PC-9 (cell line): ENCODE measurements at regions of chr1 and their contacts with region 1.

Region 1: DNA sequence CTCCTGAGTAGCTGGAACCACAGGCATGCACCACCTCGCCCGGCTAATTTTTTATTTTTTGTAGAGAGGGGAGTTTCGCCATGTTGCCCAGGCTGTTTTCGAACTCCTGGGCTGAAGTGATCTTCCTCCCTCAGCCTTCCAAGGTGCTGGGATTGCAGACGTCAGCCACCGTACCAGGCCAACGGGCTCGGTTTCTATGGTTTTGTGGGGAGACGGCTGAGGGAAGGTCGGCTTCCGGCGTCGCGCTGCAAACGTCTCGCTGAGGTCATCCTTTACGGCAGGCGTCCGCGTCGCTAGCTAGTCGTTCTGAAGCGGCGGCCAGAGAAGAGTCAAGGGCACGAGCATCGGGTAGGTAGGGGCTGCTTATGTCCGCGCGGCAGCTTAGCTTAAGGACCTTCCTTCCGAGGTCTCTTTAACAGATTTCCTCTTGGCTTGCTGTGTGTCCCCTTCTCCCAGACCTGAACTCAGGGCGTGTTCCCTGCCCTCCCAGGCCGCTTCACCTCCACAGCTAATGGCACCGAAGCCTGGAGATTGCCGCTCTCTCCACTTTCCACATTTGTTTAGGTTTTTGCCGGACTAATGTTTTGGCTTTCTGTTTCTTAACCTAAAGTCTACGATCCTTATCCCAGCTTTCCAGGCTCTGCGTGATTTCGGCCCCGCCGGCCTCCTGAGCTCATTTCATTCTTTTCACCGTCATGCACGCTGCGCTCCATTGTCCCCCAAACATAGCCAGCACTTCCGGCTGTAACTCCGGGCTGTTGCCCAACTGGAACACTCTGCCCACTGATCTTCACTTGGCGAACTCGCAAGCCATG is at the start of gene NDUFS5:
- DNase-seq: peak; percentile 83 to 89
- H3K4me3 ChIP-seq: peak within 1 kb of the TSS; percentile 86
- H3K27ac ChIP-seq: peak within 1 kb of the TSS; percentile 81
- H3K4me1 ChIP-seq: peaks cover 6% of the 10 kb centered on the region
- H3K27me3 ChIP-seq: no peaks in the 10 kb centered on the region
- CTCF ChIP-seq: no peak
- total RNA-seq, gene NDUFS5: 498 and 524 TPM in 2 replicates

Region 2: DNA sequence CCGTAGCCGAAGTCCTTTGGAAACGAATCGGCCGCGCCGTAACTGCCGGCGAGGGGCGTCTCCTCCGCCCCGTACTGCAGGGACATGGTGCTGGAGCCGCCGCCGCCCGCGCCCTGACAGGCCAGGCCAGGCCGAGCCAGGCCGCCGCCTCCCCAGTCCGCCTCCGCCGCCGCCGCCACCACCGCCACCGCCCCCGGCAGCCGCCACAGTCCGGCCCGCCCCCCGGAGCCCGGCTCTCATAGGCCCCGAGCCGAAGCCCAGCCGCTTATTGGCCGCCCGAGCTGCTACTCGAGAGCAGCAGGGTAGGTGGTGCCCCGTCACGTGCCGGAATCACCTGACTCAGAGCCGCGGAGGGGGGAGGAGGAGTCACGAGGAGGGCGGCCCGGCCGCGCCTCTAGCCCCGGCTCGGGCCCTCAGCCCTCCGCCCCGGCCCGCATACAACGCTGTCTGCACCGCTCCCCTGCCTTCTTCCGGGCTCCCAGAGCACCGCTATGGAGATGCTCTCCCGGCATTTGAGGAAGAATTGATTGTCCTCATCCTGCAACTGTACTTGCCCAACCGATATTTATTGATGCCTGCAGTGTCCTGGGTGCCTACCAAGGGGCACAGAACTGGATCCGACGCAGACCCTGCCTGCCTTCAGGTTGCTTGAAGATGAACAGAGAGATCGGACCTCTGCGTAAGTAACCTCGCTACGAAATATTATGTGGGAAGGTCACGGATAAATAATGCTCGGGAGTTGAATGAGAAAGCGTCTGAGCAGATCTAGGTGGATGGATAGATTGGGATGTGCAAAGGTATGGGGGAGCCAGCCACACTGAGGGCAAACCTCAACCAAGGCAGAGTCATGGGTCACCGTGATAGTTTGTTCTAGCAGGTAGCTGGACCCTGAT is 166.5 kb before region 1 on chr1 and contains the start of gene RRAGC:
- CTCF ChIA-PET with region 1: no interaction called
- POLR2A ChIA-PET with region 1: interaction called, 3 read pairs
- intact Hi-C with region 1: loop called (anchors 1 kb)
- DNase-seq: peak; percentile 92 to 100
- H3K4me3 ChIP-seq: peak within 1 kb of the TSS; percentile 72
- H3K27ac ChIP-seq: peak within 1 kb of the TSS; percentile 59
- H3K4me1 ChIP-seq: peaks cover 23% of the 10 kb centered on the region
- H3K27me3 ChIP-seq: no peaks in the 10 kb centered on the region
- CTCF ChIP-seq: no peak
- total RNA-seq, gene RRAGC: 22.1 and 33.0 TPM in 2 replicates

Region 3: GRCh38 chr1:38873027-38873969 is 153.0 kb before region 1 on chr1 and contains the start of gene MYCBP:
- CTCF ChIA-PET with region 1: no interaction called
- POLR2A ChIA-PET with region 1: interaction called, 3 read pairs
- intact Hi-C with region 1: loop called (anchors 1 kb)
- DNase-seq: peak; percentile 89 to 99
- H3K4me3 ChIP-seq: peak within 1 kb of the TSS; percentile 88
- H3K27ac ChIP-seq: no peak within 1 kb of the TSS
- H3K4me1 ChIP-seq: peaks cover 15% of the 10 kb centered on the region
- H3K27me3 ChIP-seq: no peaks in the 10 kb centered on the region
- CTCF ChIP-seq: peak; percentile 37; the same call in 1 of the 2 replicates
- total RNA-seq, gene MYCBP: 51.9 TPM in 2 replicates

Region 4: GRCh38 chr1:39043513-39043912 is 17.3 kb after region 1 on chr1:
- CTCF ChIA-PET with region 1: no interaction called
- POLR2A ChIA-PET with region 1: no interaction called
- intact Hi-C with region 1: no loop called
- DNase-seq: no peak
- H3K4me3 ChIP-seq: no peak overlapping the region
- H3K27ac ChIP-seq: no peak overlapping the region
- H3K4me1 ChIP-seq: no peaks in the 10 kb centered on the region
- H3K27me3 ChIP-seq: no peaks in the 10 kb centered on the region
- CTCF ChIP-seq: no peak

Region 5: DNA sequence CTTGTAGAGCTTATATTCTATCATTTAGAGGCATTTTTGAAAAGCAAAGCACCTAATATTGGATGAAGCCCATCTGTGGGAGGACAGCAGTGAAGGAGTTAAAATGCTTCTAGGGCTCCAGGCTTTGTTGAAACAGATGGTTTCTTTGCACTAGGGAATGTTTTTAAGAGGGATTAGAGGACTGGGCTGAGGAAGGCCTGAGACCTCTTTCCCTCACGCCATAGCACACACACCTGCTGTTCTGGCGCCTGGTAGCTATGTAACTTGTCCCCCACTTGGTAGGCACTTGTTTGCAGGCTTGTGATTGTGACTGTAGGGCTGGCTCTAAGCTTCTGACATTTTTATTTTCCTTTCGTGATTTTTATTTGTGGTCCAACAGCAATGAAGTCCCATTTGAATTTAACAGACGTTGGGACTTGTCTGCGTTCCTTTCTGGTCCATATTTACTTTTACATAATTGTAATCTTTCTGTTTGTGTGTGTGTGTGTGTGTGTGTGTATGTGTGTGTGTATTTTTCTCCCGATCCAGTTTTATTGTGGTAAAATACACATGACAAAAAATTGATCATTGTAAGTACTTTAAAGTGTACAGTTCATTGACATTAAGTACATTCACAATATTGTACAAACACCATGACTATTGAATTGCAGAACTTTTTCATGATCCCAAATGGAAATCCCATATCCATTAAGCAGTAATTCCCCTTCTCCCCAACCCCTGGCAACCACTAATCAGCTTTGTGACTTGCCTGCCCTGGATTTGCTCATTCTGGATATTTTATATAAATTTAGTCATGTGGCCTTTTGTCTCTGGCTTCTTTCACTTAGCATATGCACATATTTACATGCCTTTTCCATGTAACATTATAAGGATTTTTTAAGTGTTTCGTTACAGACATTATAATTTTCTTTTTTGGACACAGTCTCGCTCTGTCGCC is 144.7 kb after region 1 on chr1:
- CTCF ChIA-PET with region 1: no interaction called
- POLR2A ChIA-PET with region 1: interaction called, 12 read pairs
- intact Hi-C with region 1: no loop called
- DNase-seq: no peak
- H3K4me3 ChIP-seq: no peak overlapping the region
- H3K27ac ChIP-seq: no peak overlapping the region
- H3K4me1 ChIP-seq: peaks cover 14% of the 10 kb centered on the region
- H3K27me3 ChIP-seq: no peaks in the 10 kb centered on the region
- CTCF ChIP-seq: no peak